Breast epithelium (tissue), 4 donors: ENCODE measurements at regions of chr10 and their contacts with region 1.

Region 1: DNA sequence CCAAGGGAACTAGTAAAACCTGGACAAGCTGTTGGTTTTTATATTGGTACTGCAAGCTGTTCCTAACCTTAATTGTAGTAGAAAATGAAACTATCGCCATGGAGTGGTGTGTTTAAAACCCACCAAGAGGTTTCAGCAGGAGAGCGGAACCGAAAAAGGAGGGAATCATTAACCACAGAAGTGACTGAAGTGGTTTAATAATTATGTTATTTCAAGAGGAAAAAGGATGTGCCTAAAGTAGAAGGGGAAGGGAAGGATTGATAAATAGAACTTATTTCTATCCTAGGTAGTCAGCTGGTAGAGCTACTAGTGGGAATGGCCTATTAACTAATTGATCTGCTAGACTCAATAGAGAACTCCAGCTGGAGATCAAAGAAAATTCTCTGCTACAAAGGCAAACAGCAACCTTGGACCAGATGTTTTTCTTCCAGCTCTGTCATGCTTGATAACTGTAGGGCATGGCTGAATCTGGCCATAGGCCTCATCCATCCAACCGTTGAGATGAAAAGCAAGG is 91.8 kb downstream of the BAMBI start:
- DNase-seq: no peak
- H3K4me3 ChIP-seq: no peak overlapping the region
- H3K27ac ChIP-seq: peak overlapping the region in 1 of 2 donors; percentile 34
- H3K4me1 ChIP-seq: no peaks in the 10 kb centered on the region
- H3K27me3 ChIP-seq: no peaks in the 10 kb centered on the region
- CTCF ChIP-seq: no peak
- POLR2A ChIP-seq: no peak

Region 2: GRCh38 chr10:28839600-28840007 is 70.5 kb after region 1 on chr10:
- intact Hi-C with region 1: loop called (anchors 10 kb)
- DNase-seq: no peak
- H3K4me3 ChIP-seq: no peak overlapping the region
- H3K27ac ChIP-seq: no peak overlapping the region
- H3K4me1 ChIP-seq: no peaks in the 10 kb centered on the region
- H3K27me3 ChIP-seq: no peaks in the 10 kb centered on the region
- CTCF ChIP-seq: no peak
- POLR2A ChIP-seq: no peak